Caco-2 (cell line): ENCODE measurements at regions of chr17 and their contacts with region 1.

Region 1: DNA sequence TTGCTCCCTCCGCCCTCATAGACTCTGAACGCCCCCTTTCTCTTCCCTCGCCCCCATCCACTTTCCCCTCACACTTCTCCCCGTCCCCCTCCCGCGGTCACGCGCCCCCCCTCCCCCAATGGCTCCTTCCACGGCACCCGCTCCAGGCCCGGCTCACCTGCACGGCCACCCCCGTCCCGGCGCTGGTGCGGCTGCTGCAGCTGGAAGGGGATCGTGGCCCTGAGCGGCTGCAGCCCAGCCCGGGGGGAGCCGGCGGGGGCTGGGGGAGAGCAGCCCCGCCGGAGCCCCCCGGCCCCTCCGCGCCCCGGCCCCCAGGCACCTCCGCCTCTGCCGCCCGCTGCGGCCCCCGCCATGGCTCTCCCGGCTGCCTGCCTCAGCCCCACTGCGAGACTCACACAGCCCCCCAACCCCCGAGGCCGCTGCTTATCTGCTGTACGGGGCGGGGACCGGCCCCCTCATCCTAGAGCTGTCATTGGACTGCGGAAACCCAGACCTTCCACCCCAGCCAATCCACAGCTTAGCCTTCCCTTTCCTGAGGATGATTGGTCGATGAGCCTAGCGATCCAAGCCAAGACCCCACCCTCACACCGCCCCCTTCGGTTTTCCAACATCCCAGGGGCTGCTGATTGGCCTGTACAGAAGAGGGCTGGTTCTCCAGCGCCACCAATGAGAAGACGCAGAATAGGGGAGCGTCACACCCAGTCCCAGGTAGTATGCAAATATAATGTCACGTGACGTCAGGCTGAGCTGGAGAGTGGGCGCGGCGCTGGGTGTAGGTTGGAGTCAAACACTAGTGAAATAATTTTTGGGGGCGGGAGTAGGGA is at the start of gene FAM117A:
- DNase-seq: peak; percentile 100
- H3K4me3 ChIP-seq: peak within 1 kb of the TSS; percentile 76
- H3K4me3 Mint-ChIP-seq: peak within 1 kb of the TSS; percentile 98
- H3K27ac Mint-ChIP-seq: peak within 1 kb of the TSS; percentile 81
- H3K4me1 ChIP-seq: peaks cover 9% of the 10 kb centered on the region
- H3K4me1 Mint-ChIP-seq: peaks cover 8% of the 10 kb centered on the region
- H3K27me3 ChIP-seq: 0 out of 2 replicates have a peak, but pooled peaks cover 1% of the 10 kb centered on the region
- H3K27me3 Mint-ChIP-seq: peaks cover 13% of the 10 kb centered on the region
- CTCF ChIP-seq: no peak
- total RNA-seq, gene FAM117A: 36.8 and 41.5 TPM in 2 replicates

Region 2: DNA sequence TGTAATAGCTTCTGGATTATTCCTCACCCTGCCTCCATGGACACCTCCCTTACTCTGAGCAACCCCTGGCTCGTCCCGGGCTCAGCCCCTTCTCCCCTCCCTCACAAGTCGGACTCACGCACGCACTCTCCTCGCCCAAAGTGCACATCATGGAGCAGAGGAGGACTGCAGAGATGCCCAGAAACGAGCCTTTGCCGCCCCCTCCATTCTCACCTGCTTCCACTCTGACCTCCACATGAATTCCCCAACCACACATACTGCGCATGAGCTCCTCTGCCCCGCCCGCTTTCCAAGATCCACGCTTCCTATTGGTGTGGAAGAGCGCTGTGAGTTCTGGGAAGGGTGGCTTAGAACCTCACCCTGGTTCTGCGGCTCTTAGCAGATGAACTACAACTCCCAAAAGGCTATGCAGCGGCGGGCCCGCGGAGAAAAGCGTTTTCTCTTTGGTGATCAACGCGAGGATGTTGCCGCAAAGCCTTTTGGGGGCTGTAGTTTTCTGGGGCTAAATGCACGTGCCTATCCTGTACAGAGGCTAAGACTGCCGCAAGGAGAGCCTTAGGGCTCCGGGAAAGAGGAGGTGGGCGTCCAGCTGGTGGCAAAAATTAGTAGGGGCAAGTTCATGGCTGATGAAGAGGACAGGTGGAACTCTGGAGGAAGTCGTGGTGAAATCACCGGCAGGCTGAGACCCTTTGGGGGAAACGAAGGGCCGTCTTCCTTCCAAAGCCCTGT is 349.2 kb before region 1 on chr17 and contains the start of gene PHB1:
- CTCF ChIA-PET with region 1: interaction called, 6 read pairs
- POLR2A ChIA-PET with region 1: interaction called, 10 read pairs
- intact Hi-C with region 1: no loop called
- DNase-seq: peak; percentile 100
- H3K4me3 ChIP-seq: peak within 1 kb of the TSS; percentile 61
- H3K4me3 Mint-ChIP-seq: peak within 1 kb of the TSS; percentile 88
- H3K27ac Mint-ChIP-seq: peak within 1 kb of the TSS; percentile 84
- H3K4me1 ChIP-seq: peaks cover 4% of the 10 kb centered on the region
- H3K4me1 Mint-ChIP-seq: no peaks in the 10 kb centered on the region
- H3K27me3 ChIP-seq: no peaks in the 10 kb centered on the region
- H3K27me3 Mint-ChIP-seq: no peaks in the 10 kb centered on the region
- CTCF ChIP-seq: no peak
- total RNA-seq, gene PHB1: 761 and 848 TPM in 2 replicates

Region 3: GRCh38 chr17:49699966-49700575 is 63.9 kb before region 1 on chr17:
- CTCF ChIA-PET with region 1: interaction called, 11 read pairs
- POLR2A ChIA-PET with region 1: interaction called, 12 read pairs
- intact Hi-C with region 1: no loop called
- DNase-seq: no peak
- H3K4me3 ChIP-seq: no peak overlapping the region
- H3K4me3 Mint-ChIP-seq: no peak overlapping the region
- H3K27ac Mint-ChIP-seq: no peak overlapping the region
- H3K4me1 ChIP-seq: no peaks in the 10 kb centered on the region; the same call in 1 of the 2 replicates
- H3K4me1 Mint-ChIP-seq: peaks cover 16% of the 10 kb centered on the region
- H3K27me3 ChIP-seq: no peaks in the 10 kb centered on the region
- H3K27me3 Mint-ChIP-seq: no peaks in the 10 kb centered on the region
- CTCF ChIP-seq: no peak

Region 4: GRCh38 chr17:49739641-49740271 is 24.2 kb before region 1 on chr17:
- CTCF ChIA-PET with region 1: interaction called, 3 read pairs
- POLR2A ChIA-PET with region 1: interaction called, 11 read pairs
- intact Hi-C with region 1: no loop called
- DNase-seq: no peak
- H3K4me3 ChIP-seq: no peak overlapping the region
- H3K4me3 Mint-ChIP-seq: no peak overlapping the region
- H3K27ac Mint-ChIP-seq: no peak overlapping the region
- H3K4me1 ChIP-seq: peaks cover 7% of the 10 kb centered on the region; the same call in 1 of the 2 replicates
- H3K4me1 Mint-ChIP-seq: no peaks in the 10 kb centered on the region
- H3K27me3 ChIP-seq: no peaks in the 10 kb centered on the region
- H3K27me3 Mint-ChIP-seq: no peaks in the 10 kb centered on the region
- CTCF ChIP-seq: no peak

Region 5: GRCh38 chr17:49748791-49749190 is 15.2 kb before region 1 on chr17:
- CTCF ChIA-PET with region 1: interaction called, 6 read pairs
- POLR2A ChIA-PET with region 1: interaction called, 17 read pairs
- intact Hi-C with region 1: no loop called
- DNase-seq: no peak
- H3K4me3 ChIP-seq: no peak overlapping the region
- H3K4me3 Mint-ChIP-seq: no peak overlapping the region
- H3K27ac Mint-ChIP-seq: no peak overlapping the region
- H3K4me1 ChIP-seq: peaks cover 18% of the 10 kb centered on the region
- H3K4me1 Mint-ChIP-seq: peaks cover 12% of the 10 kb centered on the region
- H3K27me3 ChIP-seq: no peaks in the 10 kb centered on the region
- H3K27me3 Mint-ChIP-seq: no peaks in the 10 kb centered on the region
- CTCF ChIP-seq: no peak

Region 6: GRCh38 chr17:49779739-49780231 is 15.8 kb after region 1 on chr17:
- CTCF ChIA-PET with region 1: interaction called, 16 read pairs
- POLR2A ChIA-PET with region 1: interaction called, 11 read pairs
- intact Hi-C with region 1: loop called (anchors 1 kb)
- DNase-seq: peak in 1 of 2 experiments; percentile 71
- H3K4me3 ChIP-seq: no peak overlapping the region
- H3K4me3 Mint-ChIP-seq: no peak overlapping the region
- H3K27ac Mint-ChIP-seq: no peak overlapping the region
- H3K4me1 ChIP-seq: peaks cover 4% of the 10 kb centered on the region; the same call in 1 of the 2 replicates
- H3K4me1 Mint-ChIP-seq: no peaks in the 10 kb centered on the region
- H3K27me3 ChIP-seq: no peaks in the 10 kb centered on the region
- H3K27me3 Mint-ChIP-seq: peaks cover 20% of the 10 kb centered on the region
- CTCF ChIP-seq: peak; percentile 91 to 94

Region 7: DNA sequence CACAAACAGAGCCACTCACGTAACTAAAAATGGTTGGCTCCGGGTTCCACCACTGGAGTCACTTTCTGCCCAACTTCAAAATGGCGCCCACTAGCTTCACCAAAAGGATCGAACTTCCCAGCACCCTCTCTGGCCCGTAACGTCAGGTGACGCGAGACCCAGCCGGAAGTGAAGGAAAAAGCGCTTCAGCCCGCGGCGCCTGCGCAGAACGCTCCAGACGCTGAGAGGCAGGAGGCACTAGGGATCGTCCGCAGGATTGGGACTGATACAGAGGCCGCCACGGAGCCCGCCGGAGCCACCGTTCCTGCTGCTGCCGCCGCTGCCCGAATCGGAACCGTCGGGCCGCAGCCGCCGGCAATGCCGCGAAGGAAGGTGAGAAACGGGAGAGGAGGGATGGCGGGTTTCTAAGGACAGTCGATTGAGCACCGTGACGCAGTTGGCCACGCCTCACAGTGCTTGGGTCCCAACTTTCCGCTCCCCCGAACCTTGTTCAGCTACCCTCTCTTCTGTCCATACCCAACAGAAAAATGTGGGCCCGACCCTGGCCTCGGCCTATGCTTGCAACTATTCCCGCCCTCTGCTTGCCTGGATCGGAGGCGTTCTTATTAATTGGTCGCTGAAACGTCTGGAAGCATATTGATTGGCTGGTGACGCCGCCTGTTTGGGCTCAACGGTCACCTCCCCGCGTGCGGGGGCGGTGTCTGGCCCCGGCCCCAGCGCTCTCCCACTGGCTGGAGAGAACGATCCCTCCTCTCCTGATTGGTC is 24.7 kb after region 1 on chr17 and contains the start of gene KAT7:
- CTCF ChIA-PET with region 1: interaction called, 9 read pairs
- POLR2A ChIA-PET with region 1: interaction called, 88 read pairs
- intact Hi-C with region 1: loop called (anchors 1 kb)
- DNase-seq: peak; percentile 100
- H3K4me3 ChIP-seq: peak within 1 kb of the TSS; percentile 78
- H3K4me3 Mint-ChIP-seq: peak within 1 kb of the TSS; percentile 90
- H3K27ac Mint-ChIP-seq: peak within 1 kb of the TSS; percentile 96
- H3K4me1 ChIP-seq: peaks cover 13% of the 10 kb centered on the region
- H3K4me1 Mint-ChIP-seq: peaks cover 21% of the 10 kb centered on the region
- H3K27me3 ChIP-seq: no peaks in the 10 kb centered on the region
- H3K27me3 Mint-ChIP-seq: peaks cover 4% of the 10 kb centered on the region
- CTCF ChIP-seq: peak in 1 of 2 experiments; percentile 31
- total RNA-seq, gene KAT7: 131 and 137 TPM in 2 replicates